ENCODE measurements at regions of chr19 and their contacts with region 1.

Region 1: GRCh38 chr19:9674663-9675357 is at the start of gene ZNF562:
- DNase-seq: peak; percentile 84 to 91 (median 88)
- H3K4me3 ChIP-seq: peak within 1 kb of the TSS; percentile 60
- H3K27ac ChIP-seq: peak within 1 kb of the TSS; percentile 88 to 98
- H3K4me1 ChIP-seq: peaks cover 3% of the 10 kb centered on the region
- H3K27me3 ChIP-seq: no peaks in the 10 kb centered on the region
- CTCF ChIP-seq: no peak
- EP300 ChIP-seq: no peak
- POLR2A ChIP-seq: peak; percentile 45
- total RNA-seq, gene ZNF562: 26.0 to 54.6 (median 36.2) TPM

Region 2: DNA sequence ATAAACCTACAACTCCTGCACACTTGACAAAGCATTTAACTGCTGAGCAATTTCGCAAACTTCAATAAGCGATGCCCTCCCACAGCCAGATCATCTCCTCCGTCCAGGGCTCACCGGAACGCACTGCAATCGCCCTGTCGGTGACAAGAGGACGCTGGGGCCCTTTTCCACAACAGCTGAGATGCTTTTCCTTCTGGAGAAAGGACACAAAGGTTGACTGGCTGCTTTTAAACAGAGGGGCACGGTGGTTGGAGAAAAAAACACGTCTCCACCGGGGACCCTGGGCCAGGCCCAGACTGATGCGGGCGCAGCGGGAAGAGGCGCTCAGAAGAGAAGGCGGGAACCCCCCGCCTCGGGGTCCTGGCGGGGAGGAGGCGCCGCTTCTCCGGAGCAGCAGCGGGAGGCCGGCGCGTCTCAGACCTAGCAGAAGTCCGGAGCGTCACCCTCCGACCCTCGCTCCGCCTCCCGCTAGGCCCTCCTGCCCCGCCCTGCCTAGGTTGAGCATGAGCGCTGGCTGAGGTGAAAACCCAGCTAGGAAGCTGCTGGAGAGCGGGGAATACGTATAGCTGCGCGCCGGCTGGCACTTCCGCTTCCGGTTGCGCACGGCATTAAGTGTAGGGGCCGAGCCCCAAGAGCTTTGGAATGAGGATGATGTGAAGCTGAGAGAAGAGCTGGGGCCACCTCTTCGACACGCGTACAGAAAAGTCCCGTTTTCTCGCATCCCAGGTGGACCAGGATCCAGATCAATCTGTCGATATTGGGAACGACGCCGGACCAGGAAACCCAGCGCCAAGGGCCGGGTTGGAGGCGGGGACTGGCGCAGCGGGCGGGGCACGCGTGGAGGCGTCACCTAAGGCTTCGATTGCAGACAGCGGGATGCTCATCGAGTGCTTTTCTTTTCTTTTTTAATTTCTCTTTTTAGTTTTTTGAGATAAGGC is 93.6 kb after region 1 on chr19 and contains the start of gene ZNF846:
- intact Hi-C with region 1: loop called in 1 of 4 experiments (anchors 10 kb)
- DNase-seq: peak; percentile 91 to 95 (median 92)
- H3K4me3 ChIP-seq: peak within 1 kb of the TSS; percentile 84
- H3K27ac ChIP-seq: peak within 1 kb of the TSS; percentile 38 to 91
- H3K4me1 ChIP-seq: peaks cover 3% of the 10 kb centered on the region
- H3K27me3 ChIP-seq: no peaks in the 10 kb centered on the region
- CTCF ChIP-seq: no peak
- EP300 ChIP-seq: peak; percentile 25
- POLR2A ChIP-seq: peak; percentile 59
- total RNA-seq, gene ZNF846: 12.6 to 31.0 (median 21.0) TPM

Region 3: DNA sequence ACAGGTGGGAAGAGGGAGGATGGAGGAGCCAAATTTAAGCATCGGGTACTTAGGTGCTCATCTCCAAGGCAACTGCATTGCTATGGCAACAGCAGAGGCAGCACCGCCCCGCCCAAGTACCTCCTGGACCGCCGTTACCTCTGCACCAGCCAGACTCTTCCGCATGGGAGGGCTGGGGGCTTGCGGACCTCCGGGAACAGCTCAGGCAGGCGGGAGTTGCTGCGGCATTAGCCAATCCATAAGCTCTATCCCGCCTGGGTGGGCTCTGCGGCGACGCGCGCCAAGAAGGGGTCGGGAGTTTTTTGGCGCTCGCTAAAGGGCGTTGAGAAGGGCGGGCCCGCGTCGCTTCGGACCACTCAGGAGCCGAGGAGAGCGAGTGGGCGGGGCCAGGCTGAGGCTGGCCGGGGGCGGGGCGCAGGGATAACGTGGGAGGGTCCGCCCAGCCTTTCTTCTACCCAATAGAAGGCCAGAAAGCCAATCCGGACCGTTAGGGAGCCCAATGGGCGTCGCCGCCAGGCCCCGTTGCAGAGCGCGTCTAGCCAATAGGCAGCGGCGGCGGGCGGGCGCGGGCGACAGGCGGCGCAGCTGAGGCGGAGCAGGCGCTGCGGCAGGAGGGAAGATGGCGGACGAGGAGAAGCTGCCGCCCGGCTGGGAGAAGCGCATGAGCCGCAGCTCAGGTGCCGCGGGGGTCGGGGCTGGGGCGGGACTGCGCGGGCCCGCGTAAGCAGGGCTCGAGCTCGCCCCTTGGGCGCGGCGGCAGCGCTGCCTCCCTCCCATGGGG is 160.1 kb after region 1 on chr19 and contains the start of gene PIN1:
- intact Hi-C with region 1: no loop called
- DNase-seq: peak; percentile 98 to 99 (median 99)
- H3K4me3 ChIP-seq: peak within 1 kb of the TSS; percentile 87
- H3K27ac ChIP-seq: peak within 1 kb of the TSS in 1 of 2 donors; percentile 55
- H3K4me1 ChIP-seq: peaks cover 1% of the 10 kb centered on the region
- H3K27me3 ChIP-seq: no peaks in the 10 kb centered on the region
- CTCF ChIP-seq: peak; percentile 69 to 85 (median 74)
- EP300 ChIP-seq: no peak
- POLR2A ChIP-seq: no peak
- total RNA-seq, gene PIN1: 49.2 to 70.9 (median 61.0) TPM

Measured in ovary (tissue), 10 donors.